HCT116 (cell line): ENCODE measurements at regions of chr9 and their contacts with region 1.

Region 1: DNA sequence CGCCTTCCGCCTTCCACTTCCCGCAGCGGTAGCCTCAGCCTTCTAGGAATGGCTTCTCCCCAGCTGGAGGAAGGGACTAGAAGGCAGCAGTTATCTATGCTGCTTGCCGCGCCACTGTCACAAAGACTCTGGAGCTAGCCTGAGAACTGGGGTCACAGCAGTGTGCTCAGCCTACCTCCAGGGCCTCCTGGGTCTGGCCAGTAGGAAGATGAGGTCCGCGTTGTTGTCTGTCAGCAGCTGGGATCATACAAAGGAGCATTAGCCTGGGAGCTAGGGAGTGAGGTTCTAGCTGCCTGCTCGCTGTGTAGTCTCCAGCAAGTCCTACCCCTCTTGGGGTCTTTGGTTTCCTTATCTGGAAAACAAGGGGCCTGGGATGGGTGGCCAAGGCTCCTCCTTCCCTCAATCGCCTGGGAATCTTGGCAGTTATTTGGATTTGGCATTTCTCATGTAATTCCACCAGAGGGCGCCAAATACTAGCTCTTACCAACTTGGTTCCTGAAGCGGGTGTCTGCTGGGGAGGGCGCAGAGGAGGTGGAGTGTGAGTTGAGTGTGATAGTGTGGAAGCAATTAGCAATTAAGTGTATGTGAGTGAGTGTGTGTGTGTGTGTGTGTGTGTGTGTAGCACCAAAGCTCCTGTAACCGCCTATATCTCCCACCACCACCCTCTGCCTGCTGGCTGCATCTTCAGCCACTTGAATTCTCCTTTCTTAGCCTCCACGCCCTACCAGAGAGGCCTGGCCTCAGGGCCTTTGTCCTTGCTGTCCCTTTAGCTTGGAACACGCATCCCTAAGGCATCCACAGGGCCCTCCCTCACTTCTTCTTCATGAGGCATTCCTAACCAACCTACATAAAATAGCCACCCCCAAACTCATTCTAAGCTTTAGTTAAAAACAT is 97.1 kb downstream of the ENTREP1 start:
- DNase-seq: peak; percentile 47
- ATAC-seq: peak; percentile 91
- H3K4me3 ChIP-seq: no peak overlapping the region
- H3K27ac ChIP-seq: no peak overlapping the region
- H3K4me1 ChIP-seq: no peaks in the 10 kb centered on the region
- H3K27me3 ChIP-seq: no peaks in the 10 kb centered on the region
- CTCF ChIP-seq: peak; percentile 68 to 87 (median 82)
- POLR2A ChIP-seq: no peak
- RAD21 ChIP-seq: peak; percentile 95

Region 2: DNA sequence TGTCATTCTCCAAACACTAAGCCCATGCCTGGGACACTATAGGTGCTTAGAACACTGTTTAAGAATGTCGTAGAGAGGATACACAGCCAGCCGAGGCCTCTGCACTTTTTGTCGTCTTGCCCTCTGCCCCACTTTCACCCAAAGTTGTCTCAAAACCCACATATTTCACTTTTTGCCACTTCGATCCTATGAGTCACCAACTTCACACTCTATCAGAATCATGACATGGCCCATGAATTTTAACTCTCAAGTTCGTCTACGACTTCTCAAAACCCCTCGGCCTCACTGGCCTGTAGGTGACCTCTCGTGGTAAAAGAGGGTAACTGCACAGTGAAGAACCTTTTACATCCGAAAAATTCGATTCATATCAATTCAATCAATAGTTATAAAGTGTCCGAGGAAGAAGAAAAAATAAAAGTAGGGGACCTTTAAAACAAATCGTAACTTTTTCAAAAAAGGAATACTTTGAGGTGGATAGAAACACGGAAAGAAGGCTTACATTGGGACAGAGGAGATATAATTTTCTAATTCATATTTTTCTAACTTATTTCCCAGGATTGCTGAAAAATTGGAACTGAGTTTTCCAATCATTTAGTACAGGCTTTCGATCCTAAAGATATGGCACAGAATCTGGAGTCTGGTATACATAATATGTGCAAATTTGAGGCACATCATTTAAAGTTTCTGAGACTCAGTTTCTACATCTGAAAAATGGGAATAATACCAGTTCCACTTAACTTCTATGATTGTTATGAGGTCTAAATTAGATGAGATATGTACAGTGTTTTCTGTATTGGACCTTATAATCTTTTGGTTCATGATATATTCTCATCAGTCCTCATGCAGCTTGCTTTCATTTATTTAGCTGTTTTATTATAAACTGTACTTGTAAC is 127.4 kb after region 1 on chr9:
- CTCF ChIA-PET with region 1: interaction called, 20 read pairs
- POLR2A ChIA-PET with region 1: interaction called, 3 read pairs
- RAD21 ChIA-PET with region 1: no interaction called
- intact Hi-C with region 1: loop called (anchors 2 kb)
- DNase-seq: peak; percentile 38
- ATAC-seq: peak; percentile 58
- H3K4me3 ChIP-seq: no peak overlapping the region
- H3K27ac ChIP-seq: no peak overlapping the region
- H3K4me1 ChIP-seq: no peaks in the 10 kb centered on the region
- H3K27me3 ChIP-seq: peaks cover 37% of the 10 kb centered on the region; the same call in 1 of the 2 replicates
- CTCF ChIP-seq: peak; percentile 67 to 89 (median 83); a peak in 5 of 6 replicates
- POLR2A ChIP-seq: no peak
- RAD21 ChIP-seq: peak; percentile 76

Region 3: DNA sequence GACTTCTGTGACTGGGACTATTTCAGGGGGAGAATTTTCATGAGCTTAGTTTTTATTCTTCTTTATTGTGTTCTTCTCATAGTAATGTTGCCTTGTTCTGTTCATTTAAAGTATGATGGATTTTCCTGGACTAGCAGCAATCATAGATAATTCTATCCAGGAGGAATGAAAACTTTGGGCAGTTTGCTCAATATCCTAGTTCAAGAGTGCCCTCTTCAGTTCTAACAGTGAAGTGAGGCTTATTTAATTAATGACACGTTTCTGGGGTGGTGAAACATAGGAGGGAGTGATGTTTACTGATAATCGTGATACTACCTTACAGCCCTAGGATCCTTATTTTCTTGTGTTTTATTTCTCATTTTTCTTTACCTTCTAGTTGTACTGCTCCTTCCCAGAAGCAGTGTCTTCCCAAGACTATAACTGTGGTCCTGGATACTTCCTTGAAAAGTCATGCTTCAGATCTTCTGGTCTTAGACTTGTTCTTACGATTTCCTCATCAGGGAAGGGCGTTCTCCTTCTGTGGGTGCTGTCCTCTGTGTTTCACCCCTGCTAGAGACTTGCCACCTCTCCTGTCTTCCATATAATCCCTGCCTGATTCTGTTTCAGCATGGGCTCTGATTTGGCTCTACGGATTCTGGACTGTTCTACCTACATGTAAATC is 455.8 kb after region 1 on chr9:
- CTCF ChIA-PET with region 1: no interaction called
- POLR2A ChIA-PET with region 1: no interaction called
- RAD21 ChIA-PET with region 1: no interaction called
- intact Hi-C with region 1: loop called (anchors 2 kb)
- DNase-seq: peak; percentile 22
- ATAC-seq: peak; percentile 95
- H3K4me3 ChIP-seq: no peak overlapping the region
- H3K27ac ChIP-seq: no peak overlapping the region
- H3K4me1 ChIP-seq: no peaks in the 10 kb centered on the region
- H3K27me3 ChIP-seq: no peaks in the 10 kb centered on the region
- CTCF ChIP-seq: peak; percentile 39 to 68 (median 67); a peak in 5 of 6 replicates
- POLR2A ChIP-seq: no peak
- RAD21 ChIP-seq: peak; percentile 85

Region 4: DNA sequence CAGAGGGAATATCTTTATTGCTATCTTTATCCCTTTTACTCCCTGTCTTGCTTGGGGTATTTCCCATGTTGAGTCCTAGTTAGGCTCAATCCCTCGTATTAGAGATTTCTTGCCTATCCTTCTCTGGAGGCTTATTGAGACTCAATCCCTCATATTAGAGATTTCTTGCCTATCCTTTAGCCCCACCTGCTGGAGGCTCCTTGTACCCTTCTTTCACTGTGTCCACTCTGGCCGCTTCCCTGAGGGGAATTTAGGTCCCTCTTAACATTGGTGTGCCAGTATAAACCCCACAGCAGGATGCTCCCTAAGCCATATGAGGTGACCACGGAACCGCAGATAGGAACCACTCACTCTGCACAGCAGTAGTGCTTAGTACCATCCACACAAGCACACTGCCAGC is 510.7 kb after region 1 on chr9:
- CTCF ChIA-PET with region 1: interaction called, 35 read pairs
- POLR2A ChIA-PET with region 1: no interaction called
- RAD21 ChIA-PET with region 1: interaction called, 3 to 4 read pairs
- intact Hi-C with region 1: loop called (anchors 2 kb)
- DNase-seq: peak; percentile 39
- ATAC-seq: peak; percentile 91
- H3K4me3 ChIP-seq: no peak overlapping the region
- H3K27ac ChIP-seq: no peak overlapping the region
- H3K4me1 ChIP-seq: no peaks in the 10 kb centered on the region
- H3K27me3 ChIP-seq: no peaks in the 10 kb centered on the region
- CTCF ChIP-seq: peak; percentile 51 to 70 (median 65)
- POLR2A ChIP-seq: no peak
- RAD21 ChIP-seq: peak; percentile 69

Region 5: DNA sequence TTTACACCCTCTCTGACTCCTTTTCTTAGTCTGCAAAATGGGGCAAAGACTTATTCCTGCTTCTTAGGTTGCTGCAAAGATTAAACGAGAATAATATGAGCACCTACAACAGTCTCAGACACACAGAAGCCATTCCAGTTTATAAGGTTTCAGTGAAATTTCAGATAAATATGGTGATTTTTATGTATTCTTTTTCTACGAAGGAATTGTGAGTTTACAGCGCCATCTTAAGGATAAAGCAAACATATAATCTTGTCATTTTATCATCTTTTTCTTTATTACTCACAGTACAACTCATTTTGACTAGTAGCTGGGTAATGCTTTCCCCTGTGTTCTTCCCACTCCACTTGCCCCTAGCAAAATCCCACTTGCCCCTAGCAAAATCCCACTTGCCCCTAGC is 807.4 kb after region 1 on chr9:
- CTCF ChIA-PET with region 1: interaction called, 3 read pairs
- POLR2A ChIA-PET with region 1: no interaction called
- RAD21 ChIA-PET with region 1: no interaction called
- intact Hi-C with region 1: loop called (anchors 10 kb)
- DNase-seq: peak; percentile 18
- ATAC-seq: peak; percentile 42; the same call in 1 of the 2 replicates
- H3K4me3 ChIP-seq: no peak overlapping the region
- H3K27ac ChIP-seq: no peak overlapping the region
- H3K4me1 ChIP-seq: no peaks in the 10 kb centered on the region
- H3K27me3 ChIP-seq: no peaks in the 10 kb centered on the region
- CTCF ChIP-seq: peak in 2 of 3 experiments; percentile 44 to 55; a peak in 3 of 6 replicates
- POLR2A ChIP-seq: no peak
- RAD21 ChIP-seq: peak; percentile 72